Naive thymus-derived CD4-positive, alpha-beta T cell (primary cell): ENCODE measurements at regions of chr7 and their contacts with region 1.

Region 1: DNA sequence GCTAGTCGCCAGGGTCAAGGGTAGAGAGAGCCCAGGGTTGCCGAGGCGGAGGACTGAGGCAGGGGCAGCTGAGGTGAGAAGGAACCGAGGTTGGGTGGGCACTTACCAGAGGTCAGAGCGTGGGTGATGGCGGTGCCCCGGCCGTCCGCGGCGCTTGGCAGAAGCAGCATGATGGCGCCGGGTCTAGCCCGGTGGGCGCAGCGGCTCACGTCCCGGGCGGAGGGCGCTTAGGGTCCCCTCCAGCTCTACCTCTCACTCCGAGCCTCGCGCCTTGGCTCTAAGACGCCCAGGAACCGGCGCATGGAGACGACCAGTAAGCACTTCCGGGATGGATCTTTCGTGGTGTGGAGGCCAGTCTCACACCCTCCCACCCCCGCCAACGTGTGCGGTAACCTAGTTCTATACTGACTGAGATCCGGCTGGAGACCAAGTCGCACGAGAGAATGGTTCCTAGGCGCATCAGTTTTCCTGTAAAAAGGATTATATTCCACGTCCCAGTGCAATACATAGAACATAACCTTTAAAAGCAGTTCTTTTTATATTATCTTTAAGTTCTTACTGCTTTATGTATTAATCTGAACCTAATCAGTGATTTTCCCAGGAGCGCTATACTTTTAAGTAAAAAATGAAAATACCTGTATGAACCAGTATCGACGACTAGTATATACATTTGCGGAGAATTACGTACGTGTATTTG is at the start of gene DNAJC2:
- DNase-seq: peak; percentile 61 to 88 (median 83)
- ATAC-seq: peak; percentile 94
- H3K4me3 ChIP-seq: peak within 1 kb of the TSS; percentile 97
- H3K4me3 Mint-ChIP-seq: peak within 1 kb of the TSS; percentile 93 to 100 (median 98)
- H3K27ac ChIP-seq: peak within 1 kb of the TSS; percentile 86
- H3K27ac Mint-ChIP-seq: peak within 1 kb of the TSS; percentile 93 to 99 (median 97)
- H3K4me1 ChIP-seq: peaks cover 22 to 26% of the 10 kb centered on the region in 2 donors
- H3K4me1 Mint-ChIP-seq: peaks cover 31 to 84% (median 72%) of the 10 kb centered on the region in 7 donors
- H3K27me3 ChIP-seq: no peaks in the 10 kb centered on the region
- H3K27me3 Mint-ChIP-seq: no peaks in the 10 kb centered on the region
- total RNA-seq, gene DNAJC2: 30.1 to 52.7 (median 38.0) TPM

Region 2: DNA sequence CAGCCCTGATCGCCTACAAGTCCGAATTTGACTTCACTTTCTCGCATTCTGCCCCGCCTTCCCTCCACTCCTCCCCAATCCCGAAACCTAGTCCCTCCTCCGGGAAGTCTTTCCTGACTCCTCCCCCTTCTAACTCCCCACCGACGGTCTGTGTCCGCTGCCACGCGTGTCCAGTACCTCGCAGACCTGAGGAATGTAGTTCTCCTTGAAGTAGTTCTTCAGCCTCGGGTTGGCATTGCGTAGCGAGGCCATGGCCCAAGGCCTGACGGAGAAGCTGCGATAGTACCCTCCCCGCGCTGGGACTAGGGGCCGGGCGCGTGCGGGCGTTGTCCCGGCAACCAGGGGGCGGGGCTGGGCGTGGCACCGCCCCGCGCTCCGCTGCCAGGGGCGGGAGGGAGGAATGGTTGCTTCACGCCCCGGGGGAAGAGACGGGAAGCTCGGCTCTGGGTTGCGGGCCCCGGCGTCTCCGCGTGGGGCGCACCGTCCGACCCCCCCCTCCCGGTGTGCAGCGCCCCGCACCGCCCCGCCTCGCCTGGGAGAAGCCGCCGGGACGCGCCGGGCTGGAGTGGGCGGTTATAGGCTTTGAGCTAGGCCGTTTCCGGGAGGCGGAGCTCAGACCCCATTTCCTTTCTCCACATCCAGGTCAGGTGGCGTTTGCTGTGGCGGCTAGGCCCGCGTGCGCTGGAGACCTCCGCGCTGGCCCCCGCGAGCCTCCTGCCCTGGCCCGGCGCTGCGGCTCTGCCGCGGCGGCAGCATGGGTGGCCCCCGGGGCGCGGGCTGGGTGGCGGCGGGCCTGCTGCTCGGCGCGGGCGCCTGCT is 269.9 kb before region 1 on chr7 and contains the starts of genes ARMC10 and FBXL13:
- CTCF ChIA-PET with region 1: no interaction called
- POLR2A ChIA-PET with region 1: interaction called, 5 read pairs
- intact Hi-C with region 1: loop called (anchors 1 to 2 kb)
- DNase-seq: peak; percentile 86 to 93 (median 88)
- ATAC-seq: peak; percentile 93
- H3K4me3 ChIP-seq: peak within 1 kb of the TSS; percentile 77
- H3K4me3 Mint-ChIP-seq: peak within 1 kb of the TSS; percentile 94 to 100 (median 97)
- H3K27ac ChIP-seq: peak within 1 kb of the TSS; percentile 81
- H3K27ac Mint-ChIP-seq: peak within 1 kb of the TSS; percentile 85 to 98 (median 93)
- H3K4me1 ChIP-seq: peaks cover 14 to 18% of the 10 kb centered on the region in 2 donors
- H3K4me1 Mint-ChIP-seq: peaks cover 21 to 53% (median 47%) of the 10 kb centered on the region in 7 donors
- H3K27me3 ChIP-seq: no peaks in the 10 kb centered on the region
- H3K27me3 Mint-ChIP-seq: peaks cover 0 to 2% (median 0%) of the 10 kb centered on the region in 5 donors
- total RNA-seq, gene ARMC10: 13.6 to 36.4 (median 27.5) TPM
- total RNA-seq, gene FBXL13: 0.44 to 1.9 (median 1.2) TPM

Region 3: GRCh38 chr7:103148994-103149807 is 195.4 kb before region 1 on chr7 and contains the start of gene NAPEPLD:
- CTCF ChIA-PET with region 1: no interaction called
- POLR2A ChIA-PET with region 1: interaction called, 4 read pairs
- intact Hi-C with region 1: loop called (anchors 1 to 5 kb)
- DNase-seq: peak; percentile 61 to 87 (median 83)
- ATAC-seq: peak; percentile 93
- H3K4me3 ChIP-seq: peak within 1 kb of the TSS; percentile 87
- H3K4me3 Mint-ChIP-seq: peak within 1 kb of the TSS; percentile 91 to 99 (median 97)
- H3K27ac ChIP-seq: peak within 1 kb of the TSS; percentile 84
- H3K27ac Mint-ChIP-seq: peak within 1 kb of the TSS; percentile 91 to 99 (median 97)
- H3K4me1 ChIP-seq: peaks cover 0 to 23% of the 10 kb centered on the region in 2 donors
- H3K4me1 Mint-ChIP-seq: peaks cover 19 to 49% (median 46%) of the 10 kb centered on the region in 7 donors
- H3K27me3 ChIP-seq: no peaks in the 10 kb centered on the region
- H3K27me3 Mint-ChIP-seq: no peaks in the 10 kb centered on the region
- total RNA-seq, gene NAPEPLD: 2.9 to 19.7 (median 14.0) TPM

Region 4: GRCh38 chr7:103325744-103326143 is 18.9 kb before region 1 on chr7:
- CTCF ChIA-PET with region 1: interaction called, 4 read pairs
- POLR2A ChIA-PET with region 1: interaction called, 5 read pairs
- intact Hi-C with region 1: loop called in 1 of 2 experiments (anchors 2 kb)
- DNase-seq: no peak
- ATAC-seq: no peak
- H3K4me3 ChIP-seq: no peak overlapping the region
- H3K4me3 Mint-ChIP-seq: no peak overlapping the region
- H3K27ac ChIP-seq: no peak overlapping the region
- H3K27ac Mint-ChIP-seq: peak overlapping the region in 4 of 9 donors; percentile 30 to 83 (median 48)
- H3K4me1 ChIP-seq: no peaks in the 10 kb centered on the region
- H3K4me1 Mint-ChIP-seq: peaks cover 0 to 13% (median 6%) of the 10 kb centered on the region in 7 donors
- H3K27me3 ChIP-seq: no peaks in the 10 kb centered on the region
- H3K27me3 Mint-ChIP-seq: no peaks in the 10 kb centered on the region

Region 5: DNA sequence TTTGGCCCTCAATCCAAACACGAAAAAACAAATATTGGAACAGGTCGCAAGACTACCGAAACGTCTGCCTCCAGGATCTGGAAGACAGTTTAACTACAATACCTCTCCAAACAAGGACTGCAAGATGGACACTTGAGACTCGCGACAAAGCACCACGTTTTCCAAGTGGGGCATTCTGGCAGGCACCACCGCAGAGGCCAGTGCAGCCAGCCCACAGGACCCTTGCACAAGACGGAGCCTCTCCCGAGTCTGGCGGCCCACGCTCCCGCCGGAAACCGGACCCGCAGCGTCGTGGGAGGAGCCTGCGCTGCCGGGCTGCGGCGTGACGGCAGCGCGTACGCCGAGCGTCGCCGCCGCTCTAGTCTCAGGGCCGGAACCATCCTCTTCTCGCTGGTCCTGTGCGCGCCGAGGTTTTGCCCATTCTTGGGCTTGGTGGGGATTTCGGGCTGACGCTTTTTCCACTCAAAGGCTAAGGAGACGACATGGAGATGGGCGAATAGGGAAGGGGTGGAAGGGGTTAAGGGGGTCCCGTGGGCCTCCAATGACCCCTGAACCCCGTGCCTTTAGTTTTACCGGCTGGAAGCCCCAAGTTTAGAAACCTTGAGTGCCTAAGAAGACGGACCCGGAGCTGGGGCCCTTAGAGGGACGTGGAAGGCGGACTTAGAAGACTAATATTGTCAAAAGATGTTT is 863.3 kb after region 1 on chr7 and contains the start of gene ORC5:
- CTCF ChIA-PET with region 1: no interaction called
- POLR2A ChIA-PET with region 1: no interaction called
- intact Hi-C with region 1: loop called (anchors 1 to 5 kb)
- DNase-seq: peak; percentile 57 to 85 (median 74)
- ATAC-seq: peak; percentile 99
- H3K4me3 ChIP-seq: peak within 1 kb of the TSS; percentile 93
- H3K4me3 Mint-ChIP-seq: peak within 1 kb of the TSS; percentile 91 to 99 (median 95)
- H3K27ac ChIP-seq: peak within 1 kb of the TSS; percentile 88
- H3K27ac Mint-ChIP-seq: peak within 1 kb of the TSS; percentile 88 to 98 (median 93)
- H3K4me1 ChIP-seq: peaks cover 15 to 17% of the 10 kb centered on the region in 2 donors
- H3K4me1 Mint-ChIP-seq: peaks cover 18 to 57% (median 38%) of the 10 kb centered on the region in 7 donors
- H3K27me3 ChIP-seq: no peaks in the 10 kb centered on the region
- H3K27me3 Mint-ChIP-seq: peaks cover 13 to 25% (median 19%) of the 10 kb centered on the region in 5 donors
- total RNA-seq, gene ORC5: 15.9 to 28.0 (median 24.5) TPM